ENCODE measurements at regions of chr4 and their contacts with region 1.

Region 1: GRCh38 chr4:184873054-184873453 is 47.3 kb upstream of the ACSL1 start:
- DNase-seq: no peak
- CTCF ChIP-seq: no peak

Region 2: DNA sequence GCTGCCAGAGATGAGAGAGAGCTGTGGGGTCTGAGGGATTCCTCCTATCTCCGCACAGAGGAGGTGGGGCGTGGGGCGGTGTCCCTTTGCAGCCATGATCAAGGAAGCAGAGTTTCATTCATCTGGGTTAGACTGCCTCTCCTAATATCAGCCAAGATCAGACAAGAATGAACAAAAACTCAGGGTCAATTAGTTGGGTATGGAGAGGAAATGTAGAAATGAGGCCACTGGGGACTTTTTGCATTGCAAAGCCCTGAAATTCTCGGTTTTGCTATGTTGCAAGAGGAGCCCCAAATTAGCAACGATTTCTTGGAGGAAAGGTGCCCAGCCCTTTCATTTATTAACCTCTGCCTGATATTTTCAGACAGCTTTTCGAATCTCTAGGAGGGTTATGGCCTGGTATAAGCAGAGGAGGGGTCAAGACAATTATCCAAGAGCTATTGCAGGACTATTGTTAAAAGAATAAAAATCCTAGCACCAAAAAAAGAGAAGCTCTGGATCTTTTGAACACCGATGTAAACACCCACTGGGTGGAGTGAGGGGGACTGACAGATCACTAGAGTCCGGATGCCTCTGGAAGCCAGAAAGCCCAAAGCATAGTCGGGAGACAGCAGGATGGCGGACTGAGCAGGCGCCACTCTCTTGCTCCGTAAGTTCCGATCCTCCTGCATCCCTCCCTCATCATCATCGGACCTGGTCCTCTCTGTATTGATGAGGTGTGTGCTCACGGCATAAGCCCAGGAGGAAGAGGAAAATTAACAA is 12.9 kb before region 1 on chr4:
- CTCF ChIA-PET with region 1: interaction called, 11 read pairs
- POLR2A ChIA-PET with region 1: no interaction called
- DNase-seq: peak; percentile 49
- CTCF ChIP-seq: no peak

Measured in GM10248 (cell line).